Left ventricle myocardium superior (tissue), 1 donor: ENCODE measurements at regions of chr15 and their contacts with region 1.

Region 1: GRCh38 chr15:89177633-89178306 is 43.6 kb downstream of the RLBP1 start:
- DNase-seq: peak; percentile 61
- ATAC-seq: peak; percentile 44

Region 2: GRCh38 chr15:88776646-88777045 is 401.1 kb before region 1 on chr15:
- intact Hi-C with region 1: no loop called
- DNase-seq: no peak
- ATAC-seq: no peak

Region 3: GRCh38 chr15:88897456-88898194 is 280.1 kb before region 1 on chr15:
- intact Hi-C with region 1: loop called (anchors 10 kb)
- DNase-seq: peak; percentile 93
- ATAC-seq: peak; percentile 89

Region 4: DNA sequence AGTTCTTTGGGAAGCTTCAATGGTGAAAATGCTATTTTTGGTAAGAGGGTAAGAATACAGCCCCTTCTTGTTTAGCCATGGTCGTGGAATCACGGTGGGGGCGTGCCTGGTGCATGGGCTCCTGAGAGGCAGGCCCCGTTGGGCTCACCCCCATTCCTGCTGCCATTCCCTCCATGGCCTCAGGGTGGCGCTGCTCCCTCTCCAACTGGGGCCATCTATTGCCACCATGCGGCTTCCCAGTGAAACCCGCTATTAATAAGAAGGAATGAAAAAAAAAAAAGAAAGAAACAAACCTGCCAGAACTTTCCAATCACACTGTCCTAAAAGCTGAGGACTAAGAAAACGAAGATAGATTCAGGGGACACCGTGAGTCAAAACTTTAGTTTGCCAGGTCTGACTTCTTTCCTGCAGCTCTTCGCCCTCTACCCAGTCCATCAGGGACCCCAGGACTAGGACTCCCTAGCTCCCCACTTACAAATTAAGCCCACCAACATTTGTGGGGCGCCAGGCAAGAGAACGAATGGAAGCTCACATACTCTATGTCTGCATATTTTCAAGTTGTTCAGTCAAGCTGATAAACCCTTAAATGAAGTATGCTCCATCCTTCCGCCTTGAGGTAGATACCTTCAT is 120.2 kb before region 1 on chr15:
- intact Hi-C with region 1: loop called (anchors 5 kb)
- DNase-seq: peak; percentile 89
- ATAC-seq: peak; percentile 94

Region 5: GRCh38 chr15:89143503-89144162 is 34.1 kb before region 1 on chr15:
- intact Hi-C with region 1: no loop called
- DNase-seq: no peak
- ATAC-seq: peak; percentile 54

Region 6: GRCh38 chr15:89197503-89197971 is 19.8 kb after region 1 on chr15:
- intact Hi-C with region 1: no loop called
- DNase-seq: peak; percentile 35
- ATAC-seq: peak; percentile 26